Heart right ventricle (tissue), 16 donors: ENCODE measurements at regions of chr7 and their contacts with region 1.

Region 1: GRCh38 chr7:41940760-41941343 is 238.0 kb upstream of the INHBA start:
- DNase-seq: peak; percentile 23 to 68
- ATAC-seq: peak; percentile 77 to 89 (median 84)
- H3K4me3 ChIP-seq: no peak overlapping the region
- H3K27ac ChIP-seq: no peak overlapping the region
- H3K4me1 ChIP-seq: peaks cover 0 to 21% (median 10%) of the 10 kb centered on the region in 9 donors
- H3K27me3 ChIP-seq: peaks cover 0 to 28% (median 22%) of the 10 kb centered on the region in 7 donors
- CTCF ChIP-seq: peak; percentile 80 to 95 (median 89)

Region 2: DNA sequence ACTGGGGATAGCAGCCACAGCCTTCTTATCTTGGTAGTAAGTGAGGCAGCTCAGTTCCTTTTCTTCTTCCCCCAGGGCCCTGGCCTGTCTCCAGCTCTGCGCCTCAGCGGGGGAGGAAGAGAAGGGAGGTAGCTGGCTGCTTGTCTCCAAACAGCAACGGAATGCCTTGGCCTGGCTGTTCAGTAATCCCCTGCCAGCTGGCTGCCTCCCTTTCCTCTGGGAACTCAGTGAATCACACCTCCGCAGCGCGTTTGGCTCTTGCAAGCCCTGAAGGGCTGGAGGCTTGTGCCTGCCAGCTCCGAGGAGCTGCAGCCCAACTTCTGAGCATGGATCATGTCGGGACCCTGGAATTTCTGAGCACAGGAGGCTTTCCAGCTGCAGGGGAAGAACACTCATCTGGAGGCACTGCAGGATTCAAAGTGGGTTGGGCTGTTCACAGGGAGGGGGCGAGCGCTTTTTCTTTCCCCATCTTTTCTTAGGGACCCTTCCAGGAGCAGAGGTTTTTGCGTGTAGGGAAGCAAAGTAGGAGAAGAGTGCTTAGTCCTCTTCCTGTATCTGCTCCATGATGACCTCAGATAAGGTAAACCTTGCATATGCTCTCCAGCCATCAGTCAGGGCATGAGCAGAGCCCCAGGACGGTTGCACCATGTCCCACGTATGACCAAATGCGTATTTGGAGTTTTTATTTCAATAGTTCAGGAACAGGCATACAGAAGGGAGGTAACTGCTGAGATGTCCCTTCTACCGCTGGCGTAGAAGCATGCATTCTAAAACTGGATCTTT is 15.2 kb after region 1 on chr7:
- intact Hi-C with region 1: no loop called
- DNase-seq: peak; percentile 91 to 93
- ATAC-seq: peak; percentile 96 to 99 (median 99)
- H3K4me3 ChIP-seq: peak overlapping the region in 2 of 10 donors; percentile 8 to 13
- H3K27ac ChIP-seq: no peak overlapping the region
- H3K4me1 ChIP-seq: peaks cover 5 to 29% (median 24%) of the 10 kb centered on the region in 9 donors
- H3K27me3 ChIP-seq: peaks cover 0 to 32% (median 16%) of the 10 kb centered on the region in 7 donors
- CTCF ChIP-seq: no peak

Region 3: GRCh38 chr7:41977151-41977651 is 36.3 kb after region 1 on chr7:
- intact Hi-C with region 1: loop called in 2 of 10 experiments (anchors 2 to 5 kb)
- DNase-seq: peak in 1 of 2 donors; percentile 46
- ATAC-seq: peak; percentile 56 to 84 (median 73)
- H3K4me3 ChIP-seq: no peak overlapping the region
- H3K27ac ChIP-seq: no peak overlapping the region
- H3K4me1 ChIP-seq: peaks cover 0 to 32% (median 4%) of the 10 kb centered on the region in 9 donors
- H3K27me3 ChIP-seq: no peaks in the 10 kb centered on the region
- CTCF ChIP-seq: peak; percentile 36 to 84 (median 70)

Region 4: GRCh38 chr7:42700406-42701327 is 759.8 kb after region 1 on chr7:
- intact Hi-C with region 1: loop called in 3 of 10 experiments (anchors 10 kb)
- DNase-seq: no peak
- ATAC-seq: peak in 7 of 8 donors; percentile 39 to 73 (median 57)
- H3K4me3 ChIP-seq: no peak overlapping the region
- H3K27ac ChIP-seq: peak overlapping the region in 1 of 10 donors; percentile 1
- H3K4me1 ChIP-seq: peaks cover 0 to 32% (median 19%) of the 10 kb centered on the region in 9 donors
- H3K27me3 ChIP-seq: no peaks in the 10 kb centered on the region
- CTCF ChIP-seq: peak in 4 of 9 donors; percentile 12 to 34 (median 22)

Region 5: DNA sequence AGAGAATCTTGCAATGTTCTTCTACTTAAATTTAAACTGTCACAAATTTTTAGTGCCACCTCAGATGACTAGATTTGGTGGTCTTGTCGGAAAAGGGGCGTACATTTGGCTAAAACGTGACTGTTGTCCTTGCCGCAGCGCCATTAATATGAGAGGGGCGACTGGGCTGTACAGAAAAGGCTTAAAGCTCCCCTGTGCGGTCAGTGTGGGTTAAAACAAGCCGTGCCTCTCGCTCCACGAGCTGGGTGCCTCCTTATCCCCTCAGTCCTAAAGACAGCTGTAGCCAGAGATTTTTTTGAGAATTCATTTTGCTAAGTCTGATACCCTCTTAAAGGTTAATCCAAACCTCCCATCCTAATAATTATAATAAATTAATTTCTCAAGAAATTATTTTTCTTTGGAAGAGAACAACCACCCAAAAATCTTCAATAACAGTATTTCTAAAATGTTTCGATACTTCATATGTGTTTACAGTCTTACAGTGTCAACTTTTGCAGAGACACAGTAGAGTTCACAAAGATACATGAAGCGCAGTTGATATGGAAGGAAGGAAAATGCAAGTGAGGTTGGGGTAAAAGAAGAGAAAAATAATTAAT is 902.5 kb after region 1 on chr7:
- intact Hi-C with region 1: loop called in 9 of 10 experiments (anchors 2 to 10 kb)
- DNase-seq: peak; percentile 22 to 24
- ATAC-seq: peak in 7 of 8 donors; percentile 61 to 89 (median 80)
- H3K4me3 ChIP-seq: peak overlapping the region in 4 of 10 donors; percentile 25 to 31 (median 26)
- H3K27ac ChIP-seq: no peak overlapping the region
- H3K4me1 ChIP-seq: peaks cover 0 to 3% (median 0%) of the 10 kb centered on the region in 9 donors
- H3K27me3 ChIP-seq: peaks cover 0 to 27% (median 9%) of the 10 kb centered on the region in 7 donors
- CTCF ChIP-seq: peak in 8 of 9 donors; percentile 16 to 73 (median 54)

Region 6: DNA sequence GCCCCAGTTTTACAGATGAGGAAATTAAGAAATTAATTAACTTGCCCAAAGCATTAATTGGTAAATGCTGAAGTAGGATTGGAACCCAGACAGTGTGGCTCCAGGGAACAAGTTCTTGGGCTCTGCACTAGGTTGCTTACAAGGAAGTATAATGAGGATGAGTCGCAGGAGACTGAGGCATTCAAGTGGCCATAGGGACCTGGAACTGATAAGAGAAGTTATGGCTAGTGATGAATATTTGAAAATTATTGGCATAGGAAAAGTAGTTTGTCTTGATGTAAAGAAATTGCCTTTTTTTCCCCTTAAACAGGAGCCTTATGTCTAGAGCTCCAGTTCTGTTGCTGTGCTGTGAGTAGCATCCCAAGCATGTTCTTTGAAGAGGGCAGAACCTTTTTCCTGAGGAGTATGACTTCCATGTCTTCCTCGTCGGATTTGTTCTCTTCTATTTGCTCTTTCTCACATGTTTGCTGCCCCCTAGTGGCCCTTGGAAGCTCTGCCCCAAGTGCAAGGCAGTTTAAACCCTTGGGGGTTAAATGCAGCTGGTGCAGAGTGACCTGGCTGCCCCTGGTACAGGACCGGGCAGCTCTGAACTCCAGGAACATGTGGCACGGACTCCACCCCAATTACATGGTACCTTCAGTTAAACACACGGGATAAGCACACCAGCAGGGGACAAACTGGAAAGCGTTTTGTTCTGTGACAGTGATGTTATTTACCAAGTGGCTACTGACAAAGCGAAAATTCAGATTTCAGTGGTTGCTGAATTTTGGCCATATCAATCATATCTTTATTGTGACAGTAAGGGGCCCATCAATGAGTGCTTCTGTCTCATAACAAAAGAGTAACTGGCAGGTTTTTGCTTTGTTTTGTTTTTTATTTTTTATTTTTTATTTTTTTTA is 1320.4 kb after region 1 on chr7:
- intact Hi-C with region 1: loop called in 2 of 10 experiments (anchors 5 kb)
- DNase-seq: peak; percentile 53 to 61
- ATAC-seq: peak in 6 of 8 donors; percentile 38 to 77 (median 64)
- H3K4me3 ChIP-seq: no peak overlapping the region
- H3K27ac ChIP-seq: no peak overlapping the region
- H3K4me1 ChIP-seq: no peaks in the 10 kb centered on the region
- H3K27me3 ChIP-seq: peaks cover 0 to 13% (median 5%) of the 10 kb centered on the region in 7 donors
- CTCF ChIP-seq: peak; percentile 72 to 91 (median 87)